ENCODE measurements at regions of chr1 and their contacts with region 1.

Region 1: GRCh38 chr1:43763497-43763973 is 56.2 kb downstream of the ST3GAL3 start:
- DNase-seq: peak; percentile 89
- H3K4me3 ChIP-seq: no peak overlapping the region
- H3K27ac ChIP-seq: no peak overlapping the region
- H3K4me1 ChIP-seq: peaks cover 6% of the 10 kb centered on the region
- H3K27me3 ChIP-seq: no peaks in the 10 kb centered on the region
- CTCF ChIP-seq: peak; percentile 78 to 86
- POLR2A ChIP-seq: no peak

Region 2: GRCh38 chr1:43774359-43774758 is 10.8 kb after region 1 on chr1:
- CTCF ChIA-PET with region 1: interaction called, 24 read pairs
- POLR2A ChIA-PET with region 1: no interaction called
- dilution Hi-C with region 1: no loop called
- intact Hi-C with region 1: no loop called
- DNase-seq: no peak
- H3K4me3 ChIP-seq: no peak overlapping the region
- H3K27ac ChIP-seq: no peak overlapping the region
- H3K4me1 ChIP-seq: no peaks in the 10 kb centered on the region
- H3K27me3 ChIP-seq: no peaks in the 10 kb centered on the region
- CTCF ChIP-seq: no peak
- POLR2A ChIP-seq: no peak

Region 3: DNA sequence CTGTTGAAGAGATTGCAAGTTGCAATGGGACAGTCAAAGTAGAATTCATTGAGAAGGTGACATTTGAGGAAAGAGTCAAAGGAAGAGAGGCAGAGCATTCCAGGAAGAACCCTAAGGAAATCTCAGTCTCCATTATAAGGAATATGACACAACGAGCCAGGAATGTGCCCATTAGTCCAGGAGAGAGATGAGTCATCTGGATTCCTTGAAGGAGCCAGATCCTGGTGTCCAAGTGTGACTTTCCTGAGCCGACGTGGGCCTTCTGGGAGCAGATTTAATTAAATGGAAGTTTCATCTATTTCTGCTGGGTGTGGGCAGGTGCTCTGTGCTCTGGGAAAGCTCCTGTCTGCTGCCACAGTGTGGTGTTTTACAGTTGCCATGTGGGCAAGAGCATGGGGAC is 58.5 kb after region 1 on chr1:
- CTCF ChIA-PET with region 1: interaction called, 9 read pairs
- POLR2A ChIA-PET with region 1: no interaction called
- dilution Hi-C with region 1: no loop called
- intact Hi-C with region 1: loop called (anchors 2 kb)
- DNase-seq: peak; percentile 83
- H3K4me3 ChIP-seq: no peak overlapping the region
- H3K27ac ChIP-seq: peak overlapping the region; percentile 87
- H3K4me1 ChIP-seq: peaks cover 28% of the 10 kb centered on the region
- H3K27me3 ChIP-seq: no peaks in the 10 kb centered on the region
- CTCF ChIP-seq: no peak
- POLR2A ChIP-seq: no peak

Region 4: GRCh38 chr1:43902058-43902831 is 138.7 kb after region 1 on chr1:
- CTCF ChIA-PET with region 1: interaction called, 12 read pairs
- POLR2A ChIA-PET with region 1: no interaction called
- dilution Hi-C with region 1: no loop called
- intact Hi-C with region 1: no loop called
- DNase-seq: no peak
- H3K4me3 ChIP-seq: no peak overlapping the region
- H3K27ac ChIP-seq: no peak overlapping the region
- H3K4me1 ChIP-seq: no peaks in the 10 kb centered on the region
- H3K27me3 ChIP-seq: no peaks in the 10 kb centered on the region
- CTCF ChIP-seq: no peak
- POLR2A ChIP-seq: no peak

Region 5: DNA sequence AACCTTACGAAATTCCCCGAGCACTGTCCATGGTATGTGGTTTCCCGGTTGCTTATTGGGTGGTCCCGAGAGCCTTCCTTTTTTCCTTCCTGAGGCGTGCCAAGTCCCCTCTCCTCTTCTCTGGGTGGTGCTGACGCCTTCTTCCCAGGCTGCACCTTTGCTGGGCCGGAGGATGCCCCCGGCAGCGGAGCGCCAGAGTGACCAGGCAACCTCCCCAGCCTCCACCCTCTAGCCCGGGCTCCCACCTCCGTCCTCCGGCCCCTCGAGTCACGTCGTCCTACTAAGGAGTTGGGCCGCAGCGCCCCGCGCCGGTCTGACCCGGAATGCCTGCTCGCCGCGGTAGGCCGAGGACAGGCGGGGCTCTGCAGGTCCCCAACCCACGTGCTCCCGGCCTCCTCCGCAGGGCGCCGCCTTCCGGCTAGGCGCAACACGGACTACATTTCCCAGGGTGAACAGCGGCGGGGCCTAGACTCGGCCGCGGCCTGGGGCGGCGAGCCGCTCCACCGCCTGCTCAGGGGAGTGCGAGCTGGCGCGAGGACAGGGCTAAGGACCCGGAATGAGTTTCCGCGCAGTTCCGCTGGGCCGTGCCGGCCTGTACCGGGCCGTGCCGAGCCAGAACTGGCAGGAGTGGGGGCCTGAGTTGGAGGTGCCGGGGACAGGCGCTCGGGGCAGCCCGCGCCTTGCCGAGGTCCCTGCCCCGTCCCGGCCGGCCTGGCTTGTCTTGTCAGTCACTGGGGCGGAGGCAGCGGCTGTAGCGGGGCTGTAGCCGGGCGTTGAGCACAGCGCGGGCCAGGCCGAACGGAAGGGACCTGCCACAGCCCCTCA is 182.9 kb after region 1 on chr1 and contains the start of gene IPO13:
- CTCF ChIA-PET with region 1: interaction called, 69 read pairs
- POLR2A ChIA-PET with region 1: no interaction called
- dilution Hi-C with region 1: loop called (anchors 25 kb)
- intact Hi-C with region 1: loop called (anchors 1 kb)
- DNase-seq: peak; percentile 96
- H3K4me3 ChIP-seq: peak within 1 kb of the TSS; percentile 64 to 76 (median 67)
- H3K27ac ChIP-seq: peak within 1 kb of the TSS; percentile 94
- H3K4me1 ChIP-seq: peaks cover 20% of the 10 kb centered on the region
- H3K27me3 ChIP-seq: no peaks in the 10 kb centered on the region
- CTCF ChIP-seq: peak; percentile 65 to 70
- POLR2A ChIP-seq: peak; percentile 86
- total RNA-seq, gene IPO13: 25.8 and 29.3 TPM in 2 replicates

Region 6: GRCh38 chr1:44002606-44003157 is 239.1 kb after region 1 on chr1:
- CTCF ChIA-PET with region 1: interaction called, 16 read pairs
- POLR2A ChIA-PET with region 1: no interaction called
- dilution Hi-C with region 1: no loop called
- intact Hi-C with region 1: no loop called
- DNase-seq: no peak
- H3K4me3 ChIP-seq: no peak overlapping the region
- H3K27ac ChIP-seq: no peak overlapping the region
- H3K4me1 ChIP-seq: no peaks in the 10 kb centered on the region
- H3K27me3 ChIP-seq: no peaks in the 10 kb centered on the region
- CTCF ChIP-seq: peak in 1 of 2 donors; percentile 26
- POLR2A ChIP-seq: no peak

Region 7: GRCh38 chr1:45047032-45047431 is 1283.5 kb after region 1 on chr1:
- CTCF ChIA-PET with region 1: no interaction called
- POLR2A ChIA-PET with region 1: no interaction called
- dilution Hi-C with region 1: no loop called
- intact Hi-C with region 1: no loop called
- DNase-seq: no peak
- H3K4me3 ChIP-seq: no peak overlapping the region
- H3K27ac ChIP-seq: no peak overlapping the region
- H3K4me1 ChIP-seq: no peaks in the 10 kb centered on the region
- H3K27me3 ChIP-seq: no peaks in the 10 kb centered on the region
- CTCF ChIP-seq: no peak
- POLR2A ChIP-seq: no peak